ENCODE measurements at regions of chr5 and their contacts with region 1.

Region 1: GRCh38 chr5:123371575-123372179 is 51.5 kb downstream of the CEP120 start:
- DNase-seq: peak; percentile 9 to 48
- ATAC-seq: no peak
- H3K4me3 ChIP-seq: no peak overlapping the region
- H3K27ac ChIP-seq: no peak overlapping the region
- H3K4me1 ChIP-seq: no peaks in the 10 kb centered on the region
- H3K27me3 ChIP-seq: no peaks in the 10 kb centered on the region
- CTCF ChIP-seq: peak in 8 of 9 donors; percentile 27 to 65 (median 56)

Region 2: GRCh38 chr5:122500245-122501075 is 871.2 kb before region 1 on chr5:
- intact Hi-C with region 1: loop called in 3 of 10 experiments (anchors 10 kb)
- DNase-seq: peak in 1 of 2 donors; percentile 40
- ATAC-seq: peak; percentile 30 to 86 (median 76)
- H3K4me3 ChIP-seq: peak overlapping the region in 1 of 10 donors; percentile 5
- H3K27ac ChIP-seq: peak overlapping the region in 6 of 10 donors; percentile 4 to 54 (median 34)
- H3K4me1 ChIP-seq: peaks cover 0 to 18% (median 0%) of the 10 kb centered on the region in 9 donors
- H3K27me3 ChIP-seq: no peaks in the 10 kb centered on the region
- CTCF ChIP-seq: peak; percentile 16 to 63 (median 49)

Region 3: GRCh38 chr5:122515709-122516431 is 855.8 kb before region 1 on chr5:
- intact Hi-C with region 1: loop called in 1 of 10 experiments (anchors 5 kb)
- DNase-seq: no peak
- ATAC-seq: peak in 6 of 8 donors; percentile 67 to 89 (median 76)
- H3K4me3 ChIP-seq: no peak overlapping the region
- H3K27ac ChIP-seq: no peak overlapping the region
- H3K4me1 ChIP-seq: no peaks in the 10 kb centered on the region
- H3K27me3 ChIP-seq: peaks cover 0 to 15% (median 6%) of the 10 kb centered on the region in 7 donors
- CTCF ChIP-seq: peak; percentile 32 to 71 (median 65)

Region 4: DNA sequence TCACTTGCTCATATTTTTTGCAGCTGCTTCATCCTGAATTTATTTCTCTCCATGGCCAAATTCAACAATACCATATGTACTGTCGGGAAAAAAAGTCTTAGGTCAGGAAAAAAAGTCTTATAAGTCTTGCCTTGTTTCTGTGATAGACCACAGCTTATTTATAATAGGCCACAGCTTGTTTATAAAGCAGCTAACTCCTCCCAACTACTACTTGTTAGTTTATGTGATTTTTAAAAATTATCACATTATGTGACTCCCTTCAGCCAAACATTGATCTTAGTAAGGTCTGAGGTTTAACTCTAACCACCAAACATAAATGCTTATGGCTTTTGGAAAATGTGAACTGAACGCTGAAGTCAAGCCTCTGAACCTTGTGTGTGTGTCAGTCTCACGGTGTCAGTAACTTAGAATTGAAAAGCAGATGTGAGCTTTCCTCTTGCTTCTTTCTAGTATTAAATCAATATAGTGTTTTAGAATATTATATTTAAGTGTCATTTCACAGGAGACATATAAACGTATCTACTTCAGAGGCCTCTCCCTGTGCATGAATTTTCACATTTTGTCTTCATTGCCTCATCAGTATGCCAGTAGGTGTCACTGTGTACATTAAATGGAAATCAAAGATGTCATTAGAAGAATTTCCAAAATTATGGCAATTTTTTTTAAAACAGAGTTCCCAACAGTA is 474.9 kb before region 1 on chr5:
- intact Hi-C with region 1: loop called in 2 of 10 experiments (anchors 5 to 10 kb)
- DNase-seq: no peak
- ATAC-seq: no peak
- H3K4me3 ChIP-seq: no peak overlapping the region
- H3K27ac ChIP-seq: no peak overlapping the region
- H3K4me1 ChIP-seq: peaks cover 0 to under 1% (median 0%) of the 10 kb centered on the region in 9 donors
- H3K27me3 ChIP-seq: no peaks in the 10 kb centered on the region
- CTCF ChIP-seq: peak; percentile 31 to 83 (median 63)

Region 5: DNA sequence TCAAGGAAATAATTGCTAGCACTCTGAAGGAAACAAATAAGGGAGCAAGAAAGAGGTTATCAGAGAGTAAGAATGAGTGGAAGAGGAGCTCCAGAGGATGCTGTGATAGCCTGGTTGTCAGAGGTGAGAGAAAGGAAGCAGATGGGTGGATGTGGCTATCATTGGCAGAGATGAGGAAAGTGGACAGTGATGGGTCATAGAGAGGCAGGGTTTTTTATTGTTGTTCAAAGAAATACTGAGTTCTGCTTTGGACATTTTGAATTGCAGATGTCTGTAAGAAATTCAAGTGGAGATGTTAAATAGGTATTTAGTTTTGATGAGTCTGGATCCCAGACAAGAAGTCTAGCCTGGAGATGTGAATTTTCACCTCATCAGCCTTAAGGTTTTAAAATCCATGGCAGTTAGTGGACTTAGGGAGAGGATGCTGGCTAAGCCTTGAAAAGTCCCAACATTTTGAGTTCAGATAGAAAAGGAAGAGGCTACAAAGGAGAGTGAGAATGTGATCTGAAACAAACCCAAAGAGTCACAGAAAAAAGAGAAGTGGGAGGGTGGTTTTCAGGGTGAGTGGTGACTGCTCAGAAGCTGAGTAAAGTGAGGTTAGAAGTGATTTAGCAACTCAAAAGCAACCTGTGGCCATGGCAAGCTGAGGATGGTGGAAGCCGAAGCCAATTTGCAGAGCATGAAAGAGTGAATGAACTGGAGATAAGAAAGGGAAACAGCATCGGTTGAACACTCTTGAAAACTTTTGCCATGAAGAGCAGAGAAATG is 385.5 kb before region 1 on chr5:
- intact Hi-C with region 1: no loop called
- DNase-seq: no peak
- ATAC-seq: no peak
- H3K4me3 ChIP-seq: no peak overlapping the region
- H3K27ac ChIP-seq: no peak overlapping the region
- H3K4me1 ChIP-seq: no peaks in the 10 kb centered on the region
- H3K27me3 ChIP-seq: no peaks in the 10 kb centered on the region
- CTCF ChIP-seq: no peak

Region 6: GRCh38 chr5:123391009-123391408 is 19.3 kb after region 1 on chr5:
- intact Hi-C with region 1: loop called in 1 of 10 experiments (anchors 1 kb)
- DNase-seq: no peak
- ATAC-seq: no peak
- H3K4me3 ChIP-seq: no peak overlapping the region
- H3K27ac ChIP-seq: no peak overlapping the region
- H3K4me1 ChIP-seq: no peaks in the 10 kb centered on the region
- H3K27me3 ChIP-seq: no peaks in the 10 kb centered on the region
- CTCF ChIP-seq: no peak